Esophagus muscularis mucosa (tissue), 4 donors: ENCODE measurements at regions of chr10 and their contacts with region 1.

Region 1: DNA sequence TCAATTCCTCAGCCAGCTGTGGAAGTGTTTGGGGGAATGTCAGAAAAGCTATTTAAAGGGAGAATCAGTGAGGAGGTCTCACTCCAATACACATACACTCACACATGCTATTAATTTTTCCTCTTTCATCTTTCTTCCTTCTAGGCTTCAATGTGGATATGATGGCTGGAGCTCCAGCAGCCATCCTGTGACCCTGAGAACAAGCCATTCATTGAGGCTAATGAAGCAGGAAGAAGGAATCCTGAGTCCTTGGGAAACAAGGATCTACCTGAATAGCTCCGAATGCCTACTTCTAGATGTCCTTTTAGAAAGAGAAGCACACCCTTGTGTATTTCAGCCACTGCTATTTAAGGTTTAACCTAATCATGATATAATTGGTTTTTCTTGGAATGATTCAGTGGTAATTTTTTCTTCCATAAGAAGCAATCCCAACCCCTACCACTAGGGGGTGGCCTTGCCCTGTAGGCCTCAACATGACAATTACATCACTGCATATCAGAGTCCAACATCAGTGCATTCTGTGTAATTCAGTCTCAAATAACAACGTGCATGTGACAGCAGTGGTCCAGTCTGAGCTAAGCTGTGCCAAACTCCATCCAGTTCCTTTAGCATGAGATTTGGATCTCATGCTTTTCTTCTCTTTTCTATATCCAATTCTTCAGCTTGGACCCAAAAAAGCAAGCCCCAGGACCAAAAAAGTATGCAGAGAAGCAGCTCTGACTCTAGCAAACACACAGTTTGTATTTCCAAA is 85.3 kb upstream of the ANKRD1 start:
- DNase-seq: no peak
- H3K4me3 ChIP-seq: no peak overlapping the region
- H3K27ac ChIP-seq: peak overlapping the region in 2 of 4 donors; percentile 20 to 41
- H3K4me1 ChIP-seq: peaks cover 0 to 8% (median 0%) of the 10 kb centered on the region in 4 donors
- H3K27me3 ChIP-seq: no peaks in the 10 kb centered on the region
- CTCF ChIP-seq: peak; percentile 76 to 94 (median 88)
- EP300 ChIP-seq: no peak
- POLR2A ChIP-seq: no peak

Region 2: DNA sequence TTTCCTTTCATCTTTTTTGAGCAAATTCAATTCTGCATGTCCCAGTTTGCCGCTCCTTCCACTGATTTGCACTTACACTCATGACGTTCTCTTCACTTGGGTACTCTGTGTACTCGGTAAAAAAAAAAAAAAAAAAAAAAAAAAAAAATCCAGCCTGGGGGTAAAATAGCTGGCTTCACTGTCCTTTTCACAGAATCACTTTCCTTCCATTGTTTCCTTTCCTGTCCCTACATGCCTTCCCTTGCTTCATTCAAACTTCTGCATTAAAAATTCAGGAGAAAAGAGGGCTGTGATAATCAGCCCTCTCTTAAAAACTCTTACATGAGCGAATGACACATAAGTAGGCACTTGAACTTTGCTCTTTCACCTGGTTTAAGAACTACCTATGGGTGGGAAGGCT is 94.0 kb before region 1 on chr10:
- intact Hi-C with region 1: loop called (anchors 5 kb)
- DNase-seq: no peak
- H3K4me3 ChIP-seq: no peak overlapping the region
- H3K27ac ChIP-seq: no peak overlapping the region
- H3K4me1 ChIP-seq: peaks cover 0 to 6% (median 5%) of the 10 kb centered on the region in 4 donors
- H3K27me3 ChIP-seq: peaks cover 0 to 10% (median 0%) of the 10 kb centered on the region in 4 donors
- CTCF ChIP-seq: no peak
- EP300 ChIP-seq: no peak
- POLR2A ChIP-seq: no peak

Region 3: DNA sequence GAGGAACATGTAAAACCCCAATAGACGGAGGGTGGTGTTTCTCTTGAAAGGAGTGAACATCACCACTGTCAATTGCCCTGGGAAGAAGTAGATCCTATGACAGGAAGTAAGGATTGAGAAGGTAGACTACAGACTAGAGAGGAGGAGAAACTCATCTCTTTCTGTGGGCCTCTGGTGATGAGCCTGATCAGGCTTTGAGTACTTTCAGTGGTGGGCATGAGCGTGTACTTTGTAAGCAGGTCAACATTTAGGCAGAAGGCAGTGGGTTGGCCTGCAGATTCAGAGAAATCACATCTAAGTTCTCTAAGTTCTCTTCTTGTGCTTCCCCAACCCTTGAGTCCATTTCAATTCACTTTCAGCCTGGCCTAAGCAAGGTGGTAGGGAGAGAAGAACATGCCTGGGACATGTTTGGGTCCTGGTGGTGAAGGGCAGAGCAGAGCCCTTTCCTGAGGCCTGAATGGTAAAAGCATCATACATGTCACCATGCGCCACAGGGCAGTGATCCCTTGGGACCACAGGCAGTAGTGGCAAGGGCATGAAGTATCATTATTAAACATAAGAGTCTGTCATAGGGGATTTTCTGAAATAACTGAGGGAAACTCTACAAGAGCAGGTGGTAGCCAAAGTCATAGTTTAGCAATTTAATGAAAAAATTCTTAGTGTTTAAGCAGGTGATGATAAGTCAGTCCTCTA is 28.9 kb before region 1 on chr10:
- intact Hi-C with region 1: no loop called
- DNase-seq: no peak
- H3K4me3 ChIP-seq: no peak overlapping the region
- H3K27ac ChIP-seq: no peak overlapping the region
- H3K4me1 ChIP-seq: no peaks in the 10 kb centered on the region
- H3K27me3 ChIP-seq: no peaks in the 10 kb centered on the region
- CTCF ChIP-seq: no peak
- EP300 ChIP-seq: no peak
- POLR2A ChIP-seq: no peak

Region 4: DNA sequence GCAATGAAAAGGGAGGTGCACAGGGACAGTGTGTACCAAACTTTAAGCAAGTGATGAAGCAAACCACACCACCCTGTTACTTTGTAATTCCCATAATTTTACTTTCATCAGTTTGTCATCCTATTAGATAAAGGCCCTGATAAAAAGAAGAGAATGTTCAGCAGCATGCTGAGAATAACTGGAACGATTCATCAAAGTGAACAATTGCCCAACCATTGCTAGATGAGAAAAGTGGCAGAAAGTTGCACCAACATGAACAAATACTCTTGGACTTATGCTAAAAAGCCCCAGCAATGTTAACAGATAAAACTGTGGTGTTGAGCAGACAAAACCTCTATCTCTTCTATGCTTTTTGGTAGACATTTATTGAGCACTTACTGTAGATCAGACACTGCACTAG is 138.8 kb after region 1 on chr10:
- intact Hi-C with region 1: no loop called
- DNase-seq: no peak
- H3K4me3 ChIP-seq: no peak overlapping the region
- H3K27ac ChIP-seq: no peak overlapping the region
- H3K4me1 ChIP-seq: no peaks in the 10 kb centered on the region
- H3K27me3 ChIP-seq: no peaks in the 10 kb centered on the region
- CTCF ChIP-seq: no peak
- EP300 ChIP-seq: no peak
- POLR2A ChIP-seq: no peak